CD14-positive monocyte (primary cell): ENCODE measurements at regions of chr2 and their contacts with region 1.

Region 1: GRCh38 chr2:143741205-143741604 is 612.0 kb downstream of the ARHGAP15 start:
- DNase-seq: no peak
- H3K4me3 ChIP-seq: no peak overlapping the region
- H3K4me3 Mint-ChIP-seq: no peak overlapping the region
- H3K27ac ChIP-seq: no peak overlapping the region
- H3K27ac Mint-ChIP-seq: no peak overlapping the region
- H3K4me1 ChIP-seq: no peaks in the 10 kb centered on the region
- H3K4me1 Mint-ChIP-seq: peaks cover 2% of the 10 kb centered on the region
- H3K27me3 ChIP-seq: no peaks in the 10 kb centered on the region
- H3K27me3 Mint-ChIP-seq: no peaks in the 10 kb centered on the region
- CTCF ChIP-seq: no peak

Region 2: DNA sequence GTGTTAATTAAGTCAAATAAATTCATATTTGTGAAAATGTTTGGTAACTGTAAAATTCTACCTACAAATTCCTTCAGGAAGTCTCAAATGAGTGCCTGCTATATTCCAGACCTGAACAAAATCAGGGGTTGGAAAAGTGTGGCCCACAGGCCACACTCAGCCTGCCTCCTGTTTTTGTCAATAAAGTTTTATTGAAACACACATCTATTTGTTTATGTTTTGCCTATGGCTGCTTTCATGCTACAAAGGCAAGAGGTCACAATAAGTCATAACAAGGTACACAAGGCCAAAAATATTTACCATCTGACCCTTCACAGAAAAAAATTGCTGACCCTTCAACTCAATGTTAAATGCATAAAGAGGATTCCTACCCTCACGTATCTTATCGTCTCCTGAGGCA is 30.3 kb before region 1 on chr2:
- intact Hi-C with region 1: loop called in 1 of 2 experiments (anchors 1 kb)
- DNase-seq: no peak
- H3K4me3 ChIP-seq: no peak overlapping the region
- H3K4me3 Mint-ChIP-seq: no peak overlapping the region
- H3K27ac ChIP-seq: no peak overlapping the region
- H3K27ac Mint-ChIP-seq: no peak overlapping the region
- H3K4me1 ChIP-seq: no peaks in the 10 kb centered on the region
- H3K4me1 Mint-ChIP-seq: no peaks in the 10 kb centered on the region
- H3K27me3 ChIP-seq: no peaks in the 10 kb centered on the region
- H3K27me3 Mint-ChIP-seq: no peaks in the 10 kb centered on the region
- CTCF ChIP-seq: no peak